HEK293 (cell line): ENCODE measurements at regions of chr3 and their contacts with region 1.

Region 1: GRCh38 chr3:11803977-11804892 is 42.5 kb downstream of the TAMM41 start:
- H3K4me3 ChIP-seq: no peak overlapping the region
- H3K27ac ChIP-seq: no peak overlapping the region
- H3K4me1 ChIP-seq: no peaks in the 10 kb centered on the region
- CTCF ChIP-seq: no peak

Region 2: DNA sequence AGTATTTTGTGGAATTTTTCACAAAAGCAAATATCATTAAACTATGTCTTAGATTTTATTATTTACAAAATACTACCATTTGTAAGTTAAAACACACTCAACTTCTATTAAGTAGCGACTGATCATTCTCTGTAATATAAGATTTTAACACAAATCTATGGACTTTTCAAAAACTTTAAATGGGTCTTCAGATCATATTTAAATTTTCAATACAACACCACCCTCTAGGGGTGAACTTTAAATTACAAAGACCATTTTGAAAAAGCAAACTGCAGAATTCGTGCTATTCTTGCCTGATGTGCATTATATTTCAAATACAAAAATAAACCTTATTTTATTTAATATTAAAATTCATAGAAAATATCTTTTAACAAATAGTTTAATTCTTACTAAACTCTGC is 152.3 kb before region 1 on chr3:
- CTCF ChIA-PET with region 1: interaction called, 25 read pairs
- POLR2A ChIA-PET with region 1: no interaction called
- H3K4me3 ChIP-seq: no peak overlapping the region
- H3K27ac ChIP-seq: no peak overlapping the region
- H3K4me1 ChIP-seq: peaks cover 3% of the 10 kb centered on the region; the same call in 1 of the 2 replicates
- CTCF ChIP-seq: no peak

Region 3: DNA sequence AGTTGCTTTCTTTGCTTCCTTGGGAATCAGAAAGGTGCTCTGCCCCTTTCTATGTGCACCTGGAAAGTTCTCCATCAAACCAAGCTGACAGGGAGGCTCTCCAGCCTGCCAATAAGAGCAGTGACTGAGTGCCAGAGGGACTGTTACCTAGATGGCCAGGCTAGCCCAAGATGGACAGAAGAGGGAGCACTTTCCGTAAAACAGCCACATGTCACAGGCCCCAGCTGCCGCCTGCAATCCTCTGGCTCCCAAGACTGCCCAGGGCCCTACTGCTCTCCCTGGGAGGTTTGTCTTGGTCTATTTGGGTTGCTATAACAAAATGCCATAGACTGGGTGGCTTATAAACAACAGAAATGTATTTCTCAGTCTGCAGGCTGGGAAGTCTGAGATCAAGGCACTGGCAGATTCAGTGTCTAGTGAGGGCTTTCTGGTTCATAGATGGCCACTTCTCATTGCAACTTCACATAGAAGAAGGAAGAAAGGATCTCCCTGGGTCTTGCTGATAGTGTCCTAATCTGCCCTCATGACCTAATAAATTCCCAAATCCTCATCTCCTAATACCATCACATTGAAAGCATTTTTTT is 29.8 kb before region 1 on chr3:
- CTCF ChIA-PET with region 1: interaction called, 11 read pairs
- POLR2A ChIA-PET with region 1: no interaction called
- H3K4me3 ChIP-seq: no peak overlapping the region
- H3K27ac ChIP-seq: no peak overlapping the region
- H3K4me1 ChIP-seq: no peaks in the 10 kb centered on the region; the same call in 1 of the 2 replicates
- CTCF ChIP-seq: peak; percentile 52

Region 4: GRCh38 chr3:11791339-11792128 is 12.7 kb before region 1 on chr3:
- CTCF ChIA-PET with region 1: interaction called, 19 read pairs
- POLR2A ChIA-PET with region 1: no interaction called
- H3K4me3 ChIP-seq: no peak overlapping the region
- H3K27ac ChIP-seq: no peak overlapping the region
- H3K4me1 ChIP-seq: no peaks in the 10 kb centered on the region
- CTCF ChIP-seq: no peak

Region 5: GRCh38 chr3:11846281-11847034 is 42.2 kb after region 1 on chr3 and contains the start of gene TAMM41:
- CTCF ChIA-PET with region 1: no interaction called
- POLR2A ChIA-PET with region 1: no interaction called
- H3K4me3 ChIP-seq: peak within 1 kb of the TSS; percentile 96
- H3K27ac ChIP-seq: peak within 1 kb of the TSS; percentile 24; the same call in 1 of the 2 replicates
- H3K4me1 ChIP-seq: 0 out of 2 replicates have a peak, but pooled peaks cover 4% of the 10 kb centered on the region
- CTCF ChIP-seq: peak; percentile 99

Region 6: DNA sequence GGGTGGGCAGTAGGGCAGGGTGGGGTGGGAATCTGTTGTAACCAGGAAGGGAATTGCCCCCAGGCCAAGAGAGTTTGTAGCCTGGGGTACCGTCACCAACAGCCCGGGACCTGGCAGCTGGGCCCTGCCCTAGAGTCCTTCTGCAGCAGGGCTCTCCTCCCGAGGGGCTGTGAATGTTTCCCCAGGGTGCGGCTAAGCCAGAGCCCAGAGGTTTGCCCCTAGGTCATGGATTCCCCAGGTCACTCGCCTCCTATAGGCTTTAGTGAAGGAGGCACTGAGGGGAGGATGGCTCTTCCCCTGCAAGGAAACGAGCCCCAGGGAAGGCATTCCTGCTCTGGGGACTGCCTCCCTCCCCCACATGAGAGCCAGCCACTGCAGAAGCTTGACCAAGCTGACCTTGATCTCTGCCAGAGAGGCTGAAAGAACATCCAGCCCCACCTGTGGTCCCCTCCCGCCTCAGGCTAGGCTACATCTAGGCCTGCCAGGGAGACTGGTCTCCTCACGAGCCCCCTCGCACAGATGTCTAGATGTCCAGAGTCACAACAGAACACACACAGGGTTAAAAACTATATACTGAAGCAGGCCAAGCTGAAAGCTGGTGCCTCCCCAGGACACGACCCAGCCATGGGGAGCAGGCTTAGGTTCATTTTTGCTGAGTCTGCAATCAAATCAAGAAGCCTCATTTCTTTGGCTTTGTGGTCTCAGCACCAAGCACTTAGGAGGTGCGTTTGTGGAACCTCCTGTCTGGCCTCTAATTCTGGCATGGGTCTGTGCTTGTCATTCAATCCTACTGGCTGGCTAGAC is 111.6 kb after region 1 on chr3:
- CTCF ChIA-PET with region 1: no interaction called
- POLR2A ChIA-PET with region 1: no interaction called
- H3K4me3 ChIP-seq: no peak overlapping the region
- H3K27ac ChIP-seq: no peak overlapping the region
- H3K4me1 ChIP-seq: no peaks in the 10 kb centered on the region
- CTCF ChIP-seq: no peak